ENCODE measurements at regions of chr9 and their contacts with region 1.

Region 1: GRCh38 chr9:136949817-136950655 is 2.0 kb upstream of the LCN12 start:
- DNase-seq: peak; percentile 85
- ATAC-seq: peak; percentile 87
- H3K4me3 ChIP-seq: peak overlapping the region; percentile 65 to 67
- H3K27ac ChIP-seq: peak overlapping the region; percentile 94
- H3K4me1 ChIP-seq: peaks cover 22 to 43% of the 10 kb centered on the region in 2 experiments
- H3K27me3 ChIP-seq: no peaks in the 10 kb centered on the region
- CTCF ChIP-seq: peak in 2 of 3 experiments; percentile 12 to 22; a peak in 2 of 6 replicates
- POLR2A ChIP-seq: peak; percentile 60
- RAD21 ChIP-seq: no peak

Region 2: GRCh38 chr9:136928591-136928990 is 21.4 kb before region 1 on chr9:
- CTCF ChIA-PET with region 1: no interaction called
- POLR2A ChIA-PET with region 1: no interaction called
- RAD21 ChIA-PET with region 1: no interaction called
- intact Hi-C with region 1: no loop called
- DNase-seq: no peak
- ATAC-seq: peak; percentile 33; the same call in 1 of the 2 replicates
- H3K4me3 ChIP-seq: no peak overlapping the region
- H3K27ac ChIP-seq: no peak overlapping the region
- H3K4me1 ChIP-seq: no peaks in the 10 kb centered on the region
- H3K27me3 ChIP-seq: no peaks in the 10 kb centered on the region
- CTCF ChIP-seq: no peak
- POLR2A ChIP-seq: no peak
- RAD21 ChIP-seq: no peak

Region 3: GRCh38 chr9:136991993-136992818 is 42.2 kb after region 1 on chr9 and contains the start of gene PAXX:
- CTCF ChIA-PET with region 1: interaction called, 11 read pairs
- POLR2A ChIA-PET with region 1: no interaction called
- RAD21 ChIA-PET with region 1: interaction called, 3 to 4 read pairs
- intact Hi-C with region 1: loop called (anchors 1 kb)
- DNase-seq: peak; percentile 81
- ATAC-seq: peak; percentile 75
- H3K4me3 ChIP-seq: peak within 1 kb of the TSS; percentile 88 to 99
- H3K27ac ChIP-seq: peak within 1 kb of the TSS; percentile 95
- H3K4me1 ChIP-seq: peaks cover 34 to 48% of the 10 kb centered on the region in 2 experiments
- H3K27me3 ChIP-seq: no peaks in the 10 kb centered on the region
- CTCF ChIP-seq: no peak
- POLR2A ChIP-seq: peak; percentile 19
- RAD21 ChIP-seq: no peak
- total RNA-seq, gene PAXX: 89.0 TPM

Region 4: GRCh38 chr9:137000177-137000883 is 50.3 kb after region 1 on chr9:
- CTCF ChIA-PET with region 1: interaction called, 11 read pairs
- POLR2A ChIA-PET with region 1: no interaction called
- RAD21 ChIA-PET with region 1: interaction called in 1 of 2 experiments, 3 read pairs
- intact Hi-C with region 1: no loop called
- DNase-seq: no peak
- ATAC-seq: no peak
- H3K4me3 ChIP-seq: no peak overlapping the region
- H3K27ac ChIP-seq: no peak overlapping the region
- H3K4me1 ChIP-seq: peaks cover 43 to 64% of the 10 kb centered on the region in 2 experiments
- H3K27me3 ChIP-seq: no peaks in the 10 kb centered on the region
- CTCF ChIP-seq: no peak
- POLR2A ChIP-seq: no peak
- RAD21 ChIP-seq: no peak